ENCODE measurements at regions of chr10 and their contacts with region 1.

Region 1: GRCh38 chr10:55704944-55705343 is 656.1 kb downstream of the ZWINT start:
- DNase-seq: no peak
- H3K4me3 ChIP-seq: no peak overlapping the region
- H3K27ac ChIP-seq: no peak overlapping the region
- H3K4me1 ChIP-seq: no peaks in the 10 kb centered on the region
- H3K27me3 ChIP-seq: no peaks in the 10 kb centered on the region
- CTCF ChIP-seq: no peak

Region 2: GRCh38 chr10:55466806-55467504 is 238.0 kb before region 1 on chr10:
- CTCF ChIA-PET with region 1: no interaction called
- dilution Hi-C with region 1: no loop called
- in situ Hi-C with region 1: no loop called
- intact Hi-C with region 1: no loop called
- DNase-seq: no peak
- H3K4me3 ChIP-seq: no peak overlapping the region
- H3K27ac ChIP-seq: no peak overlapping the region
- H3K4me1 ChIP-seq: no peaks in the 10 kb centered on the region
- H3K27me3 ChIP-seq: no peaks in the 10 kb centered on the region
- CTCF ChIP-seq: no peak

Region 3: GRCh38 chr10:55653531-55653930 is 51.4 kb before region 1 on chr10:
- CTCF ChIA-PET with region 1: no interaction called
- dilution Hi-C with region 1: loop called (anchors 5 kb)
- in situ Hi-C with region 1: no loop called
- intact Hi-C with region 1: no loop called
- DNase-seq: no peak
- H3K4me3 ChIP-seq: no peak overlapping the region
- H3K27ac ChIP-seq: no peak overlapping the region
- H3K4me1 ChIP-seq: no peaks in the 10 kb centered on the region
- H3K27me3 ChIP-seq: no peaks in the 10 kb centered on the region
- CTCF ChIP-seq: no peak

Measured in mammary epithelial cell (primary cell).